ENCODE measurements at regions of chr3 and their contacts with region 1.

Region 1: DNA sequence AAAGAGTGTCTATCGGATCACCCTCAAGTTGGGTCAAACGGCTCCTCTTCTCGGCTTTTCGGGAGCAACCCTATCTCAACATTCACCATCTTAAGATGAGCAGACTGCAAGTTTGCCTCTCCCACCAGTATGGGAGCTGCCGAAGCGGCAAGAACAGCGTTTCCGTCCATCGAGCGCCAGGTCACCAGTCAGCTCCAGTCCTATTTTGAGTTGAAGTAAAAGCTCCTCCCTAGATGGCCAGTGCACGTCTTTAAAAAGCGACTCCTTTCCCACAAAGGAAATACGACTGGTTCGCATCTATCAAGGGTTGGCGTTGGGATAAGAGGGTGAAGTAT is 369 bp upstream of the U2SURP start:
- DNase-seq: no peak
- H3K4me3 ChIP-seq: peak overlapping the region; percentile 64
- H3K27me3 ChIP-seq: no peaks in the 10 kb centered on the region
- CTCF ChIP-seq: no peak

Region 2: GRCh38 chr3:142578327-142579223 is 422.4 kb before region 1 on chr3 and contains the start of gene ATR:
- CTCF ChIA-PET with region 1: interaction called, 4 read pairs
- POLR2A ChIA-PET with region 1: interaction called, 16 read pairs
- DNase-seq: peak; percentile 81
- H3K4me3 ChIP-seq: peak within 1 kb of the TSS; percentile 88
- H3K27me3 ChIP-seq: no peaks in the 10 kb centered on the region; the same call in 1 of the 2 replicates
- CTCF ChIP-seq: no peak
- polyA plus RNA-seq, gene ATR: 6.0 and 13.2 TPM in 2 replicates

Region 3: DNA sequence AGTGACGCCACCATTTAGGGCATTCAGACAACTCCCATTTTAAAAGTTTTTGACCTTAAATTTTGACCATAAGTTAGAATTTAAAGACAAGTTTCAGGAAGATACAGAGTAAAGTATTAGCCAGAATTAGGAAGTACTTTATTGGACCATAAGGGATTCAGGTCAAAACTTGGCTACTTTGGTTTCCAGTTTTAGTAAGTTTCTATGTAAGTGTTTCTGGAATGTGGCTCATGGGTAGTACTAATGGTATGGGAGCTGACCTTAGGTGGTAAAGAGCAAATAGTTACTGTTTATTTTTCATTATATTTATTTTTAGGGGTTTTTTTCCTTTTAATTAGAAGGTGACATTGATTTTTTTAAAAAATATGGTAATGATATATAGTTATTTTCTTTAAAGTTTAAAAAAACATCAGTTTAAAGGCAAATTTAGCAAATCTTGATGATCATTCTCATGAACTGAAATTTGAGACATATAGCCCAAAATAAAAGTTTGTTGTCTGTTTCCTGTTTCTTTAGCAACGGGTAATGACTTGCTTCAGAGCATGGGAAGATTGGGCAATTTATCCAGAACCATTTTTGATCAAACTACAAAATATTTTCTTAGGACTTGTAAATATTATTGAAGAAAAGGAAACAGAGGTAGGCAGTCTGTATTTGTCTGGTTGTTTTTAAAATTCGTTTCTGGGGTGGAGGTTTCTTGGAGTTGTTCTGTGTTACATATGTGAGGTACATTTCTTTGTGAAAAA is 34.6 kb after region 1 on chr3:
- CTCF ChIA-PET with region 1: no interaction called
- POLR2A ChIA-PET with region 1: no interaction called
- DNase-seq: no peak
- H3K4me3 ChIP-seq: no peak overlapping the region
- H3K27me3 ChIP-seq: no peaks in the 10 kb centered on the region
- CTCF ChIP-seq: no peak